ENCODE measurements at regions of chr18 and their contacts with region 1.

Region 1: GRCh38 chr18:21163647-21164547 is 52.3 kb upstream of the ROCK1 start:
- DNase-seq: no peak
- H3K4me3 Mint-ChIP-seq: no peak overlapping the region
- H3K27ac Mint-ChIP-seq: no peak overlapping the region
- H3K4me1 Mint-ChIP-seq: no peaks in the 10 kb centered on the region
- H3K27me3 Mint-ChIP-seq: no peaks in the 10 kb centered on the region

Region 2: DNA sequence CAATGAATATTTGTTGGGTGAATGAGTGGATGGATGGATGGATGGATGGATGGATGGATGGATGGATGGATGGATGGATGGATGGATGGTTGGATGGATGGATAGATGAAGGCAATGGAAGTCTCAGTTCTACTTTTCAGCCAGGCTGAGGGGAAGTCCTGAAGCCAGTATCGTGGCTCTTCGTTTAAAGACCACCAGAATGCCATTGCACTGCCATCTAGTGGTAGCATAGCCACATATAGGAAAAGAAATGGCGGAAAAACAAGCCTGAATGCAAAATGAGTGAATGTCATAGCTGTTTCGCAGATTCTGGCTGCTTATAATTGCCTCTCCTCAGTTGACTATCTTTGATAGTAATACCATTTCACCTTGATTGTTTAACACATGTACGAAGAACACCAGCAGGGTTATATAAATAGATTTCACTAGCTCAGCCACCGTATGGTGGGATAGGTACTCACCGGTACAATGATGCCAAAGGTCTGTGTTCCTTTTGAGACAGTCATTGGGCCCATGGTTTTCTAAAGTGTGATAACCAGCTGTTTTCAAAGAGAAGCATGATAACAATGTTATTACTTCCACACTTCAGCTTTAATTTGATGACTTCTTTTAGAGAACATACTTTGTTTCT is 15.8 kb after region 1 on chr18:
- CTCF ChIA-PET with region 1: interaction called, 10 read pairs
- DNase-seq: peak; percentile 57
- H3K4me3 Mint-ChIP-seq: no peak overlapping the region
- H3K27ac Mint-ChIP-seq: no peak overlapping the region
- H3K4me1 Mint-ChIP-seq: no peaks in the 10 kb centered on the region
- H3K27me3 Mint-ChIP-seq: no peaks in the 10 kb centered on the region

Measured in activated naive CD4-positive, alpha-beta T cell treated with anti-CD3 and anti-CD28 coated beads, Interleukin-2, amount 10 ng/mL, durations not matched to agents 7 days and 5 days (primary cell).